Psoas muscle (tissue), 8 donors: ENCODE measurements at regions of chr9 and their contacts with region 1.

Region 1: GRCh38 chr9:78296893-78297671 is at the start of gene PSAT1:
- DNase-seq: peak; percentile 80 to 85
- ATAC-seq: peak; percentile 79 to 89 (median 89)
- H3K4me3 ChIP-seq: peak within 1 kb of the TSS; percentile 68
- H3K27ac ChIP-seq: no peak within 1 kb of the TSS
- H3K4me1 ChIP-seq: peaks cover 19% of the 10 kb centered on the region
- H3K27me3 ChIP-seq: peaks cover 0 to 59% (median 5%) of the 10 kb centered on the region in 3 donors
- CTCF ChIP-seq: no peak
- total RNA-seq, gene PSAT1: 0.15 to 1.1 (median 0.52) TPM

Region 2: GRCh38 chr9:78235756-78236538 is 61.1 kb before region 1 on chr9 and contains the start of gene CEP78:
- intact Hi-C with region 1: loop called in 1 of 2 experiments (anchors 10 kb)
- DNase-seq: peak; percentile 92 to 94
- ATAC-seq: peak; percentile 97 to 100 (median 100)
- H3K4me3 ChIP-seq: peak within 1 kb of the TSS; percentile 96
- H3K27ac ChIP-seq: peak within 1 kb of the TSS; percentile 75
- H3K4me1 ChIP-seq: no peaks in the 10 kb centered on the region
- H3K27me3 ChIP-seq: no peaks in the 10 kb centered on the region
- CTCF ChIP-seq: no peak
- total RNA-seq, gene CEP78: 2.5 to 4.3 (median 4.2) TPM

Region 3: DNA sequence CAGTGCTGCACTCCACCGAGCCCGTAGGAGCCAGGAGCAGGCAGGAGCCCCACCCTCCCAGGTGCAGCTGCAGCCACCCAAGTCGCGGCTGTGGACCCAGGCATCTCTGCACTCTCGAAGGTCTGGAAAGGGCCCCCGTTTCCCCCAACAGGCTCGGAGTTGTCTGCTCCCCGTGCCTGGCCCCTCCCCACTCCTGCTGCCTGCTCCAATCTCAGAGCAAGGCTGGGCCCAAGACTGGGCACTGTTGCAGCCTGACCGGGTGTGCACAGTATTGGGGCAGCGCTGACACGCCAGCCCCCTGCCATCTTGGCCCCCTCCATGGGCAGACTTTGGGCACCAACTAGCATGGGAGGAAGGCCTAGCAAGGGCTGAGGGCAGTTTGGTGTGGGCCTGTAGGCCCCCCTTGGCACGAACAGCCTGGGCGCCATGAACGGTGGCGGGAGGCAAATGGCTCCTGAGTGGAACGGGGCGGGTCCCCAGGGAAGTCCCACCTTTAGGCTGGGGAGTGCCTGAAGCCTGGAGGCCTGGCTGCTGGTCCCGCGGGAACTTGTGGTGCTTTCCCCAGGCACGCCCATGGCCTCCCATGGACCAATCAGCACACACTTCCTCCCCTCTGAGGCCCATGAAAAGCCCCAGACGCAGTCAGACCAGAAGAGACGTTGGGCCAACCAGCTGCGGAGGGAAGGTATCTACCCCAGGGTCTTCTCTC is 60.2 kb after region 1 on chr9:
- intact Hi-C with region 1: no loop called
- DNase-seq: no peak
- ATAC-seq: no peak
- H3K4me3 ChIP-seq: no peak overlapping the region
- H3K27ac ChIP-seq: no peak overlapping the region
- H3K4me1 ChIP-seq: no peaks in the 10 kb centered on the region
- H3K27me3 ChIP-seq: no peaks in the 10 kb centered on the region
- CTCF ChIP-seq: no peak